ENCODE measurements at regions of chr14 and their contacts with region 1.

Region 1: GRCh38 chr14:22822571-22823098 is 7.1 kb upstream of the MRPL52 start:
- DNase-seq: peak; percentile 92
- H3K4me3 ChIP-seq: peak overlapping the region; percentile 39
- H3K4me3 Mint-ChIP-seq: peak overlapping the region; percentile 79
- H3K27ac Mint-ChIP-seq: peak overlapping the region; percentile 94
- H3K4me1 ChIP-seq: peaks cover 61% of the 10 kb centered on the region
- H3K4me1 Mint-ChIP-seq: peaks cover 44% of the 10 kb centered on the region
- H3K27me3 ChIP-seq: no peaks in the 10 kb centered on the region
- H3K27me3 Mint-ChIP-seq: no peaks in the 10 kb centered on the region
- CTCF ChIP-seq: peak; percentile 79 to 81

Region 2: DNA sequence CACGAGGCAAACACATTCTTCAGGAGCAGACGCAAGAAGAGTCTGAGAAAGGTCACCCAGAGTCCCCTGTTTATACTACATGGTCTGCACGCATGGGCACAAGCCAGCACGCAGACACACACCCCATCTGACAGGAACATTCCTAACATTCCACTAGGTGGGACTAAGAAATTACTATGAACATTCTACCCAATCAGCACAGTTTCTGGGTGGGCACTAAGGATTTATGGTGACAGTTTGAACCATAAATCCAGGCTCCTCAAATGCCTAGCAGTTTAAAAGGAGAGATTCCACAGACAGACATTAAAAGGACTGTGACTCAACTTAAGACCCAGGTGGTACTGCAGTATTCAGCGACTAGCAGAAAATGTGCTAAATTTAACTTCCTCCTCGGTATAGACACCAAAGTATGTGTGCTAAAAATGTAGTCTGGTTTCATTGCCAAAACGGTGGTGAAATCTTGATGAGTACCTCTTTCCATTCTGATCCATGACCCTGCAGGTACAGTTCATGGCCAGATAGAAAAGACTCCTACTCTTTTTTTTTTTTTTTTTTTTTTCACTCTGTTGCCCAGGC is 208.3 kb before region 1 on chr14:
- CTCF ChIA-PET with region 1: no interaction called
- POLR2A ChIA-PET with region 1: no interaction called
- intact Hi-C with region 1: loop called (anchors 5 kb)
- DNase-seq: peak; percentile 88 to 94
- H3K4me3 ChIP-seq: no peak overlapping the region
- H3K4me3 Mint-ChIP-seq: peak overlapping the region; percentile 46
- H3K27ac Mint-ChIP-seq: peak overlapping the region; percentile 99
- H3K4me1 ChIP-seq: peaks cover 28% of the 10 kb centered on the region
- H3K4me1 Mint-ChIP-seq: peaks cover 26% of the 10 kb centered on the region
- H3K27me3 ChIP-seq: no peaks in the 10 kb centered on the region
- H3K27me3 Mint-ChIP-seq: no peaks in the 10 kb centered on the region
- CTCF ChIP-seq: no peak

Region 3: DNA sequence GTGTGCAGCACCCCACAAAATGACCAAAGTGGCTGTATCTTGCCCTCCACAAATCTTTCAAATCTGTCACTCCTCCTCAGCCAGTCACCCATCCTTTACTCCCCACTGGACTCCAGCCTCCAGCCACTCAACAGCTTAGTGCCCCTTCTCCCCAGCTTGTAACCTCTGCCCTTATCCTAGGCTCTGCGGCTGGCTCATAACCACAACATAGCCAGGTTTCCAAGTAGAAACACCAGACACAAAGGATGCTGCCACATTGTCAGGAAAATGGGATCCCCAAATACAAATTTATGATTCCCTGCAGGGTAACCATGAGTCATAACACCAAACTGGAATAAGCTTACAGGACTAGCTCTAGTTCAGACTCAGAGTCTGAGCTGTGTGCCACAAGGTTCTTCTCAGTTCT is 41.0 kb before region 1 on chr14:
- CTCF ChIA-PET with region 1: interaction called, 5 read pairs
- POLR2A ChIA-PET with region 1: interaction called, 3 read pairs
- intact Hi-C with region 1: loop called (anchors 1 kb)
- DNase-seq: no peak
- H3K4me3 ChIP-seq: no peak overlapping the region
- H3K4me3 Mint-ChIP-seq: peak overlapping the region; percentile 5
- H3K27ac Mint-ChIP-seq: peak overlapping the region; percentile 30
- H3K4me1 ChIP-seq: peaks cover 14% of the 10 kb centered on the region
- H3K4me1 Mint-ChIP-seq: peaks cover 10% of the 10 kb centered on the region
- H3K27me3 ChIP-seq: no peaks in the 10 kb centered on the region
- H3K27me3 Mint-ChIP-seq: no peaks in the 10 kb centered on the region
- CTCF ChIP-seq: no peak

Region 4: GRCh38 chr14:22808388-22809209 is 14.0 kb before region 1 on chr14:
- CTCF ChIA-PET with region 1: interaction called, 28 read pairs
- POLR2A ChIA-PET with region 1: interaction called, 18 read pairs
- intact Hi-C with region 1: loop called (anchors 1 kb)
- DNase-seq: no peak
- H3K4me3 ChIP-seq: no peak overlapping the region
- H3K4me3 Mint-ChIP-seq: peak overlapping the region; percentile 68
- H3K27ac Mint-ChIP-seq: peak overlapping the region; percentile 92
- H3K4me1 ChIP-seq: peaks cover 58% of the 10 kb centered on the region
- H3K4me1 Mint-ChIP-seq: peaks cover 44% of the 10 kb centered on the region
- H3K27me3 ChIP-seq: no peaks in the 10 kb centered on the region
- H3K27me3 Mint-ChIP-seq: no peaks in the 10 kb centered on the region
- CTCF ChIP-seq: no peak

Region 5: DNA sequence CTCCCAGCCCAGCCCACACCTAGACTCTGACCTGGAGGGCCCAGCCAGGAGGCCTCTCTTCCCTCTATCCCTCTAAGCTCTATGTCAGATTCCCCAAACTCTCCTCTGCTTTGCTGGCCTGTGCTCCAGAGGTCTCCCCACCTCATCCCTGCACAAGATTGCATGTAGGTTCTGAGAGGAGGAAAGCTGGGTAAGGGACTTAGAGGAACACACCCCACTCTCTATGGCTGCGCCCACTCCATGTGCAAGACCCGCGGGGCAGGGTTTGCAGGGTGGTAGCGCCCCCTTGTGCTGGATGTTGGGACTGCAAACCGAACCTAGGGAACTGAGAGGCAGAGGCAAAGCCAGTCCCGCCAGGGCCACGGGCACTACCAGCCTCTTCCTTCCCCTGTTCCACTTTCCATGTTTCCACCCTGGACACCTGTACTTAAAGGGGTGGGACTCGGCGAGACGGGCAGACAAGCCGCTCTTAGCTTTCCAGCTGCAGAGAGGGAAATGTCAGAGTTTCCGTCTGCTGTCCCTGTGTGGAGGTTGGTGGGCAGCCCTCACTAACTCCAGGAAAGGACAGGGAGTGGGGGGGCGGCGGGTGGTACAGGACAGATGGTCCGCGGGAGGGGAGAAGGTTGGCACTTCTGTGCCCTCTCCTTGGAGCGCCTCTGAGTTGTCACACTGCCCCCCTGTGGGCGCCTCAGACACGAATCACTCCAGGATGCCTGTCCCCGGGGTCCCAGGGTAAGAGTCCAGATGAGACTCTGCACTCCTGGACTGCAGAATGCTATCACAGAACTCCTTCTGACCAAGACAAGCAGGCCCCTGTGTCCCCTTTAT is 30.5 kb after region 1 on chr14:
- CTCF ChIA-PET with region 1: interaction called, 50 read pairs
- POLR2A ChIA-PET with region 1: interaction called, 14 read pairs
- intact Hi-C with region 1: loop called (anchors 1 kb)
- DNase-seq: peak; percentile 89 to 92
- H3K4me3 ChIP-seq: peak overlapping the region; percentile 35
- H3K4me3 Mint-ChIP-seq: peak overlapping the region; percentile 69
- H3K27ac Mint-ChIP-seq: peak overlapping the region; percentile 68
- H3K4me1 ChIP-seq: peaks cover 25% of the 10 kb centered on the region
- H3K4me1 Mint-ChIP-seq: peaks cover 7% of the 10 kb centered on the region
- H3K27me3 ChIP-seq: no peaks in the 10 kb centered on the region
- H3K27me3 Mint-ChIP-seq: no peaks in the 10 kb centered on the region
- CTCF ChIP-seq: peak; percentile 87 to 91

Region 6: GRCh38 chr14:22888662-22889061 is 66.0 kb after region 1 on chr14:
- CTCF ChIA-PET with region 1: no interaction called
- POLR2A ChIA-PET with region 1: interaction called, 14 read pairs
- intact Hi-C with region 1: no loop called
- DNase-seq: no peak
- H3K4me3 ChIP-seq: no peak overlapping the region
- H3K4me3 Mint-ChIP-seq: no peak overlapping the region
- H3K27ac Mint-ChIP-seq: no peak overlapping the region
- H3K4me1 ChIP-seq: no peaks in the 10 kb centered on the region
- H3K4me1 Mint-ChIP-seq: no peaks in the 10 kb centered on the region
- H3K27me3 ChIP-seq: no peaks in the 10 kb centered on the region
- H3K27me3 Mint-ChIP-seq: no peaks in the 10 kb centered on the region
- CTCF ChIP-seq: no peak

Region 7: GRCh38 chr14:22939684-22940083 is 117.0 kb after region 1 on chr14:
- CTCF ChIA-PET with region 1: no interaction called
- POLR2A ChIA-PET with region 1: no interaction called
- intact Hi-C with region 1: no loop called
- DNase-seq: no peak
- H3K4me3 ChIP-seq: no peak overlapping the region
- H3K4me3 Mint-ChIP-seq: no peak overlapping the region
- H3K27ac Mint-ChIP-seq: no peak overlapping the region
- H3K4me1 ChIP-seq: no peaks in the 10 kb centered on the region
- H3K4me1 Mint-ChIP-seq: no peaks in the 10 kb centered on the region
- H3K27me3 ChIP-seq: no peaks in the 10 kb centered on the region
- H3K27me3 Mint-ChIP-seq: no peaks in the 10 kb centered on the region
- CTCF ChIP-seq: no peak

Region 8: GRCh38 chr14:22973217-22974032 is 150.8 kb after region 1 on chr14:
- CTCF ChIA-PET with region 1: no interaction called
- POLR2A ChIA-PET with region 1: interaction called, 5 read pairs
- intact Hi-C with region 1: loop called (anchors 5 kb)
- DNase-seq: peak; percentile 58 to 76
- H3K4me3 ChIP-seq: no peak overlapping the region
- H3K4me3 Mint-ChIP-seq: peak overlapping the region; percentile 27
- H3K27ac Mint-ChIP-seq: peak overlapping the region; percentile 84
- H3K4me1 ChIP-seq: peaks cover 49% of the 10 kb centered on the region
- H3K4me1 Mint-ChIP-seq: peaks cover 45% of the 10 kb centered on the region
- H3K27me3 ChIP-seq: no peaks in the 10 kb centered on the region
- H3K27me3 Mint-ChIP-seq: no peaks in the 10 kb centered on the region
- CTCF ChIP-seq: peak; percentile 70 to 71